Dendritic cell treated with granulocyte-macrophage colony-stimulating factor and Interleukin-4, amounts not matched to agents 40 ng/mL and 50 ng/mL, for 4 days (primary cell): ENCODE measurements at regions of chr1 and their contacts with region 1.

Region 1: GRCh38 chr1:70221241-70222121 is at the start of gene SRSF11:
- H3K4me3 Mint-ChIP-seq: peak within 1 kb of the TSS; percentile 86
- H3K27ac Mint-ChIP-seq: peak within 1 kb of the TSS; percentile 94
- H3K4me1 Mint-ChIP-seq: peaks cover 20% of the 10 kb centered on the region
- H3K27me3 Mint-ChIP-seq: no peaks in the 10 kb centered on the region

Region 2: DNA sequence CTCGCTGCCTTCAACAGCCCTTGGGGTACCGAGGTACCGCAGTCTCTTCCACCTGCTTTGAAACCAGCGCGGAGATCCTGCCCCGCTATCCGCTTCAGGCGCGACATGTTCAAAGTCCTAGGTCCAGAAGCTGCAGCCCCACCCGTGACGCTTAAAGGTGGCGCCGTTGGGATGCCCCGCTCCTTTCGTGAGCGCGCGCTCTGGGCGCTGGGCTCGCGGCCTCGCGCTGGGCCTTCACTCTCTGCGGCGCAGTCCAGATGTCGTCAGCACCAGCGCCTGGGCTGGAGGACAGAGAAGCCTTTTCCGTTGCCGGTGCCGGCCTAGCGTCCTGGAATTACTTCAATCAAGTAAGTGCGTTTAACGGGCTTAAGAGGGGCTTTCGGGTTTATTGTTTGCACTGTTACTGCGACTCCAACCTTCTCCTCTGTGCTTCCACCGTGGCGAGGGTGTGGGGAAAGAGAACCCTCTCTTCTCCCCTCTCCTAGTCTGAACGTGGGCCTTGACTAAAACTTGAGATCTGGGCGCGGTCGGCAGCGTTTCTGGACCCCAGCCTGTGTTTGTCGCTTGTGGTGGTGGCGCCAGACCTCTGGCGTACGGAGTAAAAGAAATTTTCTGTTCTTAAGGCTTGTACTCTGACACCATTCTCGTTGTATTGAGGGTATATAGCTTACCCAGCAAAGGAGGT is 15.9 kb before region 1 on chr1 and contains the start of gene LRRC40:
- intact Hi-C with region 1: loop called (anchors 1 kb)
- H3K4me3 Mint-ChIP-seq: peak within 1 kb of the TSS; percentile 91
- H3K27ac Mint-ChIP-seq: peak within 1 kb of the TSS; percentile 94
- H3K4me1 Mint-ChIP-seq: peaks cover 48% of the 10 kb centered on the region
- H3K27me3 Mint-ChIP-seq: no peaks in the 10 kb centered on the region

Region 3: DNA sequence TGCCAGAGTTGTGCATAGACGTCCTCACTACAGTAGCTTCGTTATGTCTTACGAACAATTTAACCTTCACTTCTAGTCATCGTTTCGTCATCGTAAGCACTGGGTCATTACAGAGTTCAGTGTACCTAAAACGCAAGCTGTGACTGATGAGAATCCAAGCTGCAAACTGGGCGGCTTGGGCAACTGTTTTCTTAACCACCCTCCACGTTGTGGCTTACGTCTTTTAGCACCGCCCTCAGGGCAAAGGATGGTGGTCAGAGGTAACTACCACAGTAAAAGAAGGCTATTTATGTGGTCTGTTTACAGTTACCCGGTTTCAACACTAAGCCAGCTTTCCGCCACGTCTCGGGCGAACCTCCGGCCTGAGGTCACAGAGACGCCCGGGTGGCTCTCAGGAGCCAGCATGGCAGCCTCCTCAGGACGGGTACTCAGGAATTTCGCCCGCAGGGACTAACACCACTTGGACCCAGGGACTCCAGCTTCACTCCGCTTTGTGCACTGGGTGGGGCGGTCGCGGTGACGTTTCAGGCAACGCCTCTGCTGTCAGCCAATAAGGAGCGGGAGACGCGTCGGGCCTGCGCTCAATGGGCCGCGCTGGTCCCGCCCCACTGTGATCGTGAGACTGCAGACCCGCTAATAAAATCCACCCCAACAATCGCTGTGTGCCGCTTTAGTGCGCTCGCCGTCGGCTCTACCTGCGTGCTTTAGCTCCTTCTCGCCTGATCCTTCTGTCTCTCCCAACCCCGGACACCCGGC is 189.3 kb after region 1 on chr1 and contains the start of gene CTH:
- intact Hi-C with region 1: loop called (anchors 5 kb)
- H3K4me3 Mint-ChIP-seq: peak within 1 kb of the TSS; percentile 93
- H3K27ac Mint-ChIP-seq: peak within 1 kb of the TSS; percentile 73
- H3K4me1 Mint-ChIP-seq: no peaks in the 10 kb centered on the region
- H3K27me3 Mint-ChIP-seq: peaks cover 8% of the 10 kb centered on the region